GM18951 (cell line): ENCODE measurements at regions of chr4 and their contacts with region 1.

Region 1: GRCh38 chr4:138555584-138555983 is 313.4 kb upstream of the SLC7A11 start:
- POLR2A ChIP-seq: no peak

Region 2: DNA sequence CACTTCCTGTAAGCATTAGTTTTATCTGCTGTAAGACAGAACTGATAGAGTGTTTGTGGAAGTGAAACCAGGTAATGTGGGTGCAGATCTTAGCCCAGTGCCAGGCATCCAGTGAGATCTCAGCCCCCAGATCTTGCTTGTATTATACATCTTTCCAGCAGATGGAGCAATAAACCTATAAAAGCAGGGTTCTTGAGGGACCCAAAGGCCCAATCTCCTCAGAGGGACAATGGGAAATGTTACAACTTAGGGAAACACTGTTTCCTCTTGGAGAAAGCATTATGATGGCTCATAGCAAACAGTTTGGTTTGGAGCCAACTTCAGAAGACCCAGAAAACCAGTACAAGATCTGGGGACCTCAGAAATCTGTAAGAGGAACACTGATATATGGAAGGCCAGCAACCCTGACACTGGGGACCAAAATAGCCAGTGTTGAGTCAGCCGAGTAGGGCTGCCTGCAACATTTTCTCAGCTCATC is 519.8 kb before region 1 on chr4:
- in situ Hi-C with region 1: loop called (anchors 25 kb)
- POLR2A ChIP-seq: no peak